H1 (cell line): ENCODE measurements at regions of chr17 and their contacts with region 1.

Region 1: DNA sequence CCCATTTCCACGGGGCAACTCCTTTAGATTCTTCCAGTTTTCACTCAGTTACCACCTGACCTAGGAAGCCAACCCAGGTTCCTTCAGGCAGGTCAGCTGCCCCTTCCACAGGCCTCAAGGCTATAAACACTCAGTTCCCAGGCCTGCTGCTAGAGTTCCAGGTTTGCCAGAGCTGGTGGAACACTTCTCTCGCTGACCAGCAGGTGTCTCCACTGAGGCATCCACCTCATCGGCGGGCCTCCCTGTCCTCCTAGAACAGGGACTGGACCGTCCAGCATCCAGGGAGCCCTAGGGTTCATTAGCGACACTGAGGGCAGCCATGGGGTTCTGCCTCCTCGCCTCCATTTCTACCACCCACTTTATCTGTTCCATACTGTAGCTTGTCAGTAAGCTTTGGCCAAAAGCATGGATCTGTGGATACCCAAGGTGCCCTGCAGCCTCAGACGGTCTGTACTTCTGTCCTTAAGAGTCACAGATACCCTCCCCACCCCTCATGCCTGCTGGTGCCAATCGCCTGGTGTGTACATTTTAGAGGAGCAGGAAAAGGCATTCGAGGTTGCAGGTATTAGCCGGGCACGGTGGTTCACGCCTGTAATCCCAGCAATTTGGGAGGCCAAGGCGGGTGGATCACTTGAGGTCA is 29.0 kb downstream of the PIMREG start:
- DNase-seq: peak in 1 of 2 experiments; percentile 93
- H3K4me3 ChIP-seq: no peak overlapping the region
- H3K27ac ChIP-seq: no peak overlapping the region
- H3K4me1 ChIP-seq: peaks cover 0 to 13% (median 8%) of the 10 kb centered on the region in 4 experiments; a peak in 4 of 7 replicates
- H3K27me3 ChIP-seq: no peaks in the 10 kb centered on the region
- CTCF ChIP-seq: peak; percentile 85 to 99 (median 98)
- EP300 ChIP-seq: no peak; a peak in 1 of 3 replicates
- POLR2A ChIP-seq: no peak
- RAD21 ChIP-seq: peak; percentile 85 to 92

Region 2: GRCh38 chr17:6386041-6386630 is 87.1 kb before region 1 on chr17:
- CTCF ChIA-PET with region 1: no interaction called
- POLR2A ChIA-PET with region 1: no interaction called
- DNase-seq: peak in 1 of 2 experiments; percentile 43
- H3K4me3 ChIP-seq: no peak overlapping the region
- H3K27ac ChIP-seq: no peak overlapping the region
- H3K4me1 ChIP-seq: no peaks in the 10 kb centered on the region
- H3K27me3 ChIP-seq: no peaks in the 10 kb centered on the region
- CTCF ChIP-seq: peak in 2 of 3 experiments; percentile 8 to 18; a peak in 2 of 4 replicates
- EP300 ChIP-seq: no peak
- POLR2A ChIP-seq: no peak
- RAD21 ChIP-seq: no peak

Region 3: DNA sequence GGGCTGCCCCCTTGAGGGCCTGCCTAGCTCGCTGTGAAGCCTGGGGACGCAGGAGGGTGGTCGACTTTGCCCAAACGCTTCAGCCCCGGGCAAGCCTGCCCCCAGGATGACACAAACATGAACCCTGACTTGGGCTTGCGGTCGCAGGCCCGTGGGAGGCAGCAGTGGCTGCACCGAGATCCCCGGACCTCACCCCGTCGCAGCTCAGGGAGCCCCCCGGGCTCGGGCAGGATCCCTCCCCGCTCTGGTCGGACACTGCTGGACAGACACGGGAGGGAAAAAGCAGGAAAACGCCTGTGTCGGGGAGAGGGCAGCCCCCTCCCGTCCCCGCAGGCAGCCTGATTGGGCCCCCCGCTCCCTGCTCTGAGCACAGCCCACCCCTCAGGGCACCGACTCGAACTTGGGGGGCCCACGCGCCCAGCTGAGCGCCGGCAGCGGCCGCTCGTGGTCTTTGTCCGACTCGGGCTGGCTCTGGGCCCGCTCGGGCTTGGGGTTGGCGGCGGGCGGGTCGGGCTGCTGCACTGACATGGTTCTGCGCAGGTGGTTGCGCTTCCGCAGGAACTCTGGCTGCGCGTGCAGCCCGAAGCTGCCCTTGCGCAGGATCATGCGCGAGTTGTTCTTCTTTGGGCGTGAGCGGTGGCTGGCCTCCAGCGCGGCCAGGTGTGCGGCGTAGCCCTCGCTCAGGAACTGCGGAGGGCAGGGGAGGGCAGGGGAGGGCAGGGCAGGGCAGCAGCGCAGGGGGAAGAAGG is 18.1 kb before region 1 on chr17:
- CTCF ChIA-PET with region 1: interaction called, 68 read pairs
- POLR2A ChIA-PET with region 1: interaction called, 10 read pairs
- DNase-seq: peak in 1 of 2 experiments; percentile 73
- H3K4me3 ChIP-seq: peak overlapping the region; percentile 49 to 75 (median 74)
- H3K27ac ChIP-seq: peak overlapping the region; percentile 51; the same call in 1 of the 2 replicates
- H3K4me1 ChIP-seq: peaks cover 2 to 50% (median 29%) of the 10 kb centered on the region in 4 experiments
- H3K27me3 ChIP-seq: no peaks in the 10 kb centered on the region; a peak in 3 of 7 replicates
- CTCF ChIP-seq: peak in 1 of 3 experiments; percentile 0; a peak in 1 of 4 replicates
- EP300 ChIP-seq: no peak
- POLR2A ChIP-seq: peak in 1 of 2 experiments; percentile 53; a peak in 1 of 3 replicates
- RAD21 ChIP-seq: no peak

Region 4: DNA sequence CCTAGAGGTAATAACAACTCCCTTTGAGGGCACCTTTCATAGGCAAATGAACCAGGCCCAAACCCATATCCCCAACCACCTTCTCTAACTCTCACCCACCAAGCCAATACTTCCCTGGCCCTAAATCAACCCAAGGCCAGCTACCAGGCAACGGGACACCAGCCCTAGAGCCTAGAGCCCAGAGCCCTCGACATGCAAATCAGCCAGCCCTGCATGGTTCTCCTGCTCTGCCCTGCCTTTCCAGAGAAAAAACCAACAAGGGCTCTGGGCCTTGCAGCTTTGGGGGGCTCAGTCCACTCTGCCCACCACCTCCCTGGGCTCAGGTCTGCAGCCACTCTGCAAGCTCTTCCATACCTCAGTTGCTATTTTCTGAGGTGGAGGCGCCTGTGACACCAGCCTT is 28.1 kb after region 1 on chr17:
- CTCF ChIA-PET with region 1: interaction called, 11 read pairs
- POLR2A ChIA-PET with region 1: interaction called, 3 read pairs
- DNase-seq: no peak
- H3K4me3 ChIP-seq: no peak overlapping the region
- H3K27ac ChIP-seq: no peak overlapping the region
- H3K4me1 ChIP-seq: peaks cover 3 to 22% (median 9%) of the 10 kb centered on the region in 4 experiments
- H3K27me3 ChIP-seq: no peaks in the 10 kb centered on the region
- CTCF ChIP-seq: no peak
- EP300 ChIP-seq: no peak
- POLR2A ChIP-seq: no peak
- RAD21 ChIP-seq: no peak

Region 5: DNA sequence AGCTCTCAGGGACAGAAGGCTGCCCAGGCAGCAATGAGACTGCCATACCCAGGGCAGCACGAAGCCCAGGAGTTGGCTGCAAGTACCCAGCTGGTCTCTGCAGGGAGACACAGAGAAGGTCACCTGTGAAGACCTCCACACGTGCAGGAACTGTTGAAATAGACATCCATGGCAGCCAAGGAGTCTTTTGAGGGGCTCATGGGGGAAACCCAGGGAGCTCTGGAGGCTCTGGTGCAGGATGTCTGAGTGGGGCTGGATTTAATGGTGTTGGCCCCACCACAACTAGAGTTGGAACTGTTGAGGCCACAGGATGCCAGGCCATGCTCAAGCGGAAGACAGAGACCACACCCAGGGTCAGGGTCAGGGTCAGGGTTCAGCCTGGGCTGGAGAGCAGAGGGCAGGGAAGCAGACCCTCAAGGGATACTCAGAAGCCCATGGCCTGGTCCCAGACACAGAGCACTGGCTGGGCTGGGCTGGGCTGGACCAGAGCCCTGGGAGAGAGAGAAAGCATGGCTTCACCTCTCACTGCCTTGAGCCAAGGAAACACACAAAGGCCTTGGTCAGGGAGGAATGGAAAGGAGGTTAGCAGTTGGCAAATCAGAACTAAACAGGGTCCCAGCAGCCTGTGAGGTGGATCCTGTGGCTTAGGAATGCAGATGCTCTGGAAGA is 61.7 kb after region 1 on chr17:
- CTCF ChIA-PET with region 1: interaction called, 36 read pairs
- POLR2A ChIA-PET with region 1: no interaction called
- DNase-seq: no peak
- H3K4me3 ChIP-seq: no peak overlapping the region
- H3K27ac ChIP-seq: no peak overlapping the region
- H3K4me1 ChIP-seq: peaks cover 0 to 6% (median 3%) of the 10 kb centered on the region in 4 experiments; a peak in 6 of 7 replicates
- H3K27me3 ChIP-seq: no peaks in the 10 kb centered on the region
- CTCF ChIP-seq: no peak
- EP300 ChIP-seq: no peak
- POLR2A ChIP-seq: no peak
- RAD21 ChIP-seq: no peak

Region 6: DNA sequence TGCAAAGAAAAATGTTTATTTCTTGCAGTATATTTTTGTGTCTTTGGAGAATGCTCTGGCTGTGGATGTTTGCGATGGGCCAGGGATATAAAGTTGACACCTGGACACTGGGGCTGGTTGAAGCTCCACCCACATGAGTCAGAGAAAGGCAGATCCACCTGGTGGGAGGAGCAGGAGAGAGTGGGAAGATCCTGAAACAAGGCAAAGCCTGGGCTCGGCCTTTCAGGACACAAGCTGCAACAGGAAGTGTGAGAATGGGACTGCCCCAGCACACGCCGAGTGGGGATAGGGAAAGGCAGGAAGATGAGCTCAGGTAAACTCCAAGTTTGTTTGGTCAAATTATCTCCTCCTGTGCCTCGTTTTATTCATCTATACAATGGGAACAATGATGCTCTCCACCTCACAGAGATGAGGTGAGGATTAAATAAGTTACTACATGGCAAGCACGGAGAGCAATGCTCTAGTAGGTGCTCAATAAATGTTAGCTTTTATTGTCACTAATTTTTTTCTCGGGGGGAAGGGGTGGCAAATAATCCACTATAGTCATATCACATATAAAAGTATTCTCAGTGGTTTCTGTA is 104.5 kb after region 1 on chr17:
- CTCF ChIA-PET with region 1: interaction called, 19 read pairs
- POLR2A ChIA-PET with region 1: interaction called, 3 read pairs
- DNase-seq: peak in 1 of 2 experiments; percentile 39
- H3K4me3 ChIP-seq: no peak overlapping the region
- H3K27ac ChIP-seq: no peak overlapping the region
- H3K4me1 ChIP-seq: peaks cover 0 to 10% (median 4%) of the 10 kb centered on the region in 4 experiments; a peak in 4 of 7 replicates
- H3K27me3 ChIP-seq: no peaks in the 10 kb centered on the region
- CTCF ChIP-seq: no peak
- EP300 ChIP-seq: no peak
- POLR2A ChIP-seq: no peak
- RAD21 ChIP-seq: no peak